ENCODE measurements at regions of chr19 and their contacts with region 1.

Region 1: DNA sequence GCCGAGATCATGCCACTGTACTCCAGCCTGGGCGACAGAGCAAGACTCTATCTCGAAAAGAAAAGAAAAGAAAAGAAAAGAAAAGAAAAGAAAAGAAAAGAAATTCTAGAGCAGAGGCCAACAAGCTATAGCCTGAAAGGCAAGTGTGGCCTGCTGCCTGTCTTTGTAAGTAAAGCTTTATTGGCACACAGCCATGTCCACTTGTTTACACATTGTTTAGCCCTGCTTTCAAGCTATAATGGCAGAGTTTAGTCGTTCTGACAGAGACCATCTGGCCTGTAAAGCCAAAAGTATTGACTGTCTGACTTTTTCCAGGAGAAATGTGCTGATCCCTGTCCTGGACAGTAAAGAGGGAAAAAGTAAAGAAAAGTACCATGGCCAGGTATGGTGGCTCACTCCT is 18.3 kb downstream of the NWD1 start:
- DNase-seq: no peak
- H3K4me3 Mint-ChIP-seq: no peak overlapping the region
- H3K27ac Mint-ChIP-seq: peak overlapping the region; percentile 63
- H3K4me1 Mint-ChIP-seq: peaks cover 13% of the 10 kb centered on the region
- H3K27me3 Mint-ChIP-seq: no peaks in the 10 kb centered on the region
- CTCF ChIP-seq: no peak

Region 2: DNA sequence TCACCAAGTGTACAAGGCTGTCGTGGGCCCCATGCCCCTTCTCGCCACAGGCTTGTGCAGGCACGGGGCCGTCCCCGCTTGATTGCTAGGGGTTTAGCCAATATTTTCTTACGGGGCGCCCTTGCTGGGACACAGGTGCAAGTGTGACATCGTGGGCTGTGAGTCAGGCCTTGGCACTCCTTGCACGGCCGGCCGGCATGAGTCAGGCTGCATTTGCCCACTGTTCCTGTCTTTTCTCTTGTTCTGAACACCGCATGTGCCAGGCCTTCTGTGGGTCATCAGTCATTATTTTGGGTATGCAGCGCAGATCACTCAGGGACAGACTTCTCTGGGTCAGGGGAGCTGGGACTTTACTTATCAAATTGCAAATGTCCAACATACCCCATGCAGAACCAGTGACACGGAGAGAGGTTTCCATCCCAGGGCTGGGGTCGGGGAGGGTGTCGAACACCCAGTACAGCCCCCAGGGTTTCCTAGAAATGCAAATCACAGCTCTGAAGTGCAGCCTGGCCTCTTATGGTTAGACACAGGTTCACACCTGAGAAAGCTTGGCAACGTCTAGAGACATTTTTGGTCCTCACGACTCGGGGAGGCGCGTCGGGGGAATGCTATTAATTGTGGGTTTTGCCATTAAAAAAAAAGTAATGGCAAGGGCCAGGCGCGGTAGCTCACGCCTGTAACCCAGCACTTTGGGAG is 435.8 kb before region 1 on chr19:
- CTCF ChIA-PET with region 1: no interaction called
- POLR2A ChIA-PET with region 1: no interaction called
- intact Hi-C with region 1: no loop called
- DNase-seq: peak; percentile 83
- H3K4me3 Mint-ChIP-seq: no peak overlapping the region
- H3K27ac Mint-ChIP-seq: no peak overlapping the region
- H3K4me1 Mint-ChIP-seq: peaks cover 7% of the 10 kb centered on the region
- H3K27me3 Mint-ChIP-seq: peaks cover 11% of the 10 kb centered on the region
- CTCF ChIP-seq: no peak

Region 3: GRCh38 chr19:16702118-16702517 is 35.8 kb before region 1 on chr19:
- CTCF ChIA-PET with region 1: interaction called, 3 read pairs
- POLR2A ChIA-PET with region 1: interaction called, 10 read pairs
- intact Hi-C with region 1: no loop called
- DNase-seq: peak; percentile 93
- H3K4me3 Mint-ChIP-seq: no peak overlapping the region
- H3K27ac Mint-ChIP-seq: no peak overlapping the region
- H3K4me1 Mint-ChIP-seq: peaks cover 10% of the 10 kb centered on the region
- H3K27me3 Mint-ChIP-seq: no peaks in the 10 kb centered on the region
- CTCF ChIP-seq: no peak

Region 4: GRCh38 chr19:16721051-16721450 is 16.9 kb before region 1 on chr19:
- CTCF ChIA-PET with region 1: interaction called, 11 read pairs
- POLR2A ChIA-PET with region 1: interaction called, 119 read pairs
- intact Hi-C with region 1: loop called (anchors 2 kb)
- DNase-seq: no peak
- H3K4me3 Mint-ChIP-seq: no peak overlapping the region
- H3K27ac Mint-ChIP-seq: no peak overlapping the region
- H3K4me1 Mint-ChIP-seq: peaks cover 18% of the 10 kb centered on the region
- H3K27me3 Mint-ChIP-seq: no peaks in the 10 kb centered on the region
- CTCF ChIP-seq: no peak

Region 5: GRCh38 chr19:16771618-16772017 is 33.7 kb after region 1 on chr19:
- CTCF ChIA-PET with region 1: interaction called, 5 read pairs
- POLR2A ChIA-PET with region 1: interaction called, 3 read pairs
- intact Hi-C with region 1: loop called (anchors 5 kb)
- DNase-seq: peak; percentile 88
- H3K4me3 Mint-ChIP-seq: no peak overlapping the region
- H3K27ac Mint-ChIP-seq: no peak overlapping the region
- H3K4me1 Mint-ChIP-seq: no peaks in the 10 kb centered on the region
- H3K27me3 Mint-ChIP-seq: no peaks in the 10 kb centered on the region
- CTCF ChIP-seq: peak; percentile 89

Region 6: GRCh38 chr19:16836115-16837034 is 98.5 kb after region 1 on chr19:
- CTCF ChIA-PET with region 1: no interaction called
- POLR2A ChIA-PET with region 1: no interaction called
- intact Hi-C with region 1: no loop called
- DNase-seq: peak; percentile 16
- H3K4me3 Mint-ChIP-seq: no peak overlapping the region
- H3K27ac Mint-ChIP-seq: peak overlapping the region; percentile 59
- H3K4me1 Mint-ChIP-seq: peaks cover 8% of the 10 kb centered on the region
- H3K27me3 Mint-ChIP-seq: no peaks in the 10 kb centered on the region
- CTCF ChIP-seq: no peak

Region 7: GRCh38 chr19:16920758-16921210 is 182.9 kb after region 1 on chr19:
- CTCF ChIA-PET with region 1: no interaction called
- POLR2A ChIA-PET with region 1: interaction called, 16 read pairs
- intact Hi-C with region 1: no loop called
- DNase-seq: peak; percentile 99
- H3K4me3 Mint-ChIP-seq: peak overlapping the region; percentile 41
- H3K27ac Mint-ChIP-seq: peak overlapping the region; percentile 69
- H3K4me1 Mint-ChIP-seq: peaks cover 9% of the 10 kb centered on the region
- H3K27me3 Mint-ChIP-seq: no peaks in the 10 kb centered on the region
- CTCF ChIP-seq: no peak